ENCODE measurements at regions of chr1 and their contacts with region 1.

Region 1: GRCh38 chr1:205631727-205632373 is at the start of gene ELK4:
- DNase-seq: peak; percentile 99 to 100
- ATAC-seq: peak; percentile 83 to 93 (median 84)
- H3K4me3 ChIP-seq: peak within 1 kb of the TSS; percentile 74
- H3K4me3 Mint-ChIP-seq: peak within 1 kb of the TSS; percentile 97
- H3K27ac ChIP-seq: peak within 1 kb of the TSS; percentile 97
- H3K27ac Mint-ChIP-seq: peak within 1 kb of the TSS; percentile 97 to 99
- H3K4me1 ChIP-seq: peaks cover 22% of the 10 kb centered on the region
- H3K4me1 Mint-ChIP-seq: peaks cover 31 to 37% of the 10 kb centered on the region in 2 donors
- H3K27me3 ChIP-seq: no peaks in the 10 kb centered on the region
- H3K27me3 Mint-ChIP-seq: peaks cover 0 to 5% of the 10 kb centered on the region in 2 donors
- CTCF ChIP-seq: peak; percentile 75
- total RNA-seq, gene ELK4: 107 to 155 (median 139) TPM

Region 2: DNA sequence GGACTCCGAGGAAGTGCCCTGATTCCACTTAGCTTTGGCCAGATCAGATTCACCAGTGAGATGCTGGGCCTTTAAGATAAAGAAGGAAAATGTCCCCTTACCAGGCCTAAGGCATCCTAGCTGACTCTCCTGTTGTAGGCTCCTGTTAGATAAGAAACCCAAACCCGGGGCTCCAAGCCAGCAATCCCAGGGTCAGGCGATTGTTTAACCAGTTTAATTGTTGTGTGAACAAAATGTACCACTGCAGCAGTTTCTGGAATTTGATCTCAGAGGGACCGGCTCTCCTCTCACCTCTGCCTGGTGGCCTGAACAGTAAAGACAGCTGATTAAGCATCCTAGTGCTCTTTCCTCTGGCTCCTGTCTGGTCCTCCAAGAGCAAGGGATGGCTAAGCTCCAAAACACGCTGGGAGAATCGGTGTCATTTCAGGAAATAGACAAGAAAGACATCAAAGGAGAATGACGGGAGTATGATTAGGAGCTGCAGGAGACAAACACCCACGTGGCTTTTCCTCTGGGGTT is 265.8 kb before region 1 on chr1:
- intact Hi-C with region 1: no loop called
- DNase-seq: no peak
- ATAC-seq: no peak
- H3K4me3 ChIP-seq: no peak overlapping the region
- H3K4me3 Mint-ChIP-seq: no peak overlapping the region
- H3K27ac ChIP-seq: no peak overlapping the region
- H3K27ac Mint-ChIP-seq: no peak overlapping the region
- H3K4me1 ChIP-seq: no peaks in the 10 kb centered on the region
- H3K4me1 Mint-ChIP-seq: no peaks in the 10 kb centered on the region
- H3K27me3 ChIP-seq: no peaks in the 10 kb centered on the region
- H3K27me3 Mint-ChIP-seq: peaks cover 4 to 13% of the 10 kb centered on the region in 2 donors
- CTCF ChIP-seq: no peak

Region 3: GRCh38 chr1:205528887-205529825 is 102.7 kb before region 1 on chr1:
- intact Hi-C with region 1: loop called (anchors 2 kb)
- DNase-seq: peak; percentile 81 to 88
- ATAC-seq: peak; percentile 76 to 91 (median 88)
- H3K4me3 ChIP-seq: no peak overlapping the region
- H3K4me3 Mint-ChIP-seq: peak overlapping the region; percentile 35
- H3K27ac ChIP-seq: no peak overlapping the region
- H3K27ac Mint-ChIP-seq: no peak overlapping the region
- H3K4me1 ChIP-seq: peaks cover 9% of the 10 kb centered on the region
- H3K4me1 Mint-ChIP-seq: peaks cover 0 to 7% of the 10 kb centered on the region in 2 donors
- H3K27me3 ChIP-seq: no peaks in the 10 kb centered on the region
- H3K27me3 Mint-ChIP-seq: peaks cover 0 to 7% of the 10 kb centered on the region in 2 donors
- CTCF ChIP-seq: peak; percentile 95

Region 4: DNA sequence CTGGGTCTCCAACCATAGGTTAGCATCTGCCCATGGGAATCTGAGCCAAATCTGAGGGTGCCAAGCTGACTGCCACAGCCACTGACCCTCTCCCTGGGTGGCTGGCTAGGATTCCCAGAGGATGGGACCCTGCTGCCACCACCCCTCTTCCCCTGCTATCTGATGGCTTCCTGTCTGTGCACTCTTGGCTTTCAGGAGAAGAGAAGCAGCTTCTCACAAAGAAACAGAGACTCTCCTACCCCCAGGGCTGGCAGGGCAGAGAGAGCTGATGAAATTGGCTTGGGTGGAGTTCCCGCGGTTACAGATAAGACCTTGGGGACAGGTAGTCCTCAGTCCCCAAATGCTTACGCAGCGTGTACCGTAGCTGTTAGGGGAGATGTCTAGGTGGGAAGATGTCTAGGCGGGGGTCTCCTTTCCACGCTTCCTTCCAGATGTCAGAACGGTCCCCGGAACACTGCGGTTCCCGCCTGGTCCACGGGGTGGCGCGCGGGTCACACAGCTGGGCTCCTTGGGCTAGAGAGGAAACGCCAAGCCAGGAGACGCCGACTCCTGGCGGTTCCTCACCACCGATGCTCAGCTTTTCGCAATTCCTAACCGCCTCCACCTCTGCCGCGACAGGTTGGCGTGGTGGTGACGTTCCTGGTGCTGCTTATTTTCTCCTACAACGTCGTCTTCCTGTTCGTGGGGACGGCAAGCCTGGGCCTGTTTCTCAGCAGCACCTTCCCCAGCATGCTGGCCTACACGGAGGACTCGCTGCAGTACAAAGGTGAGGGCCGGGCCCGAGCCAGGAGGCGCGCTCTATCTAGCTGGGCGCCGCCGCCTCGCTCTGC is 40.1 kb before region 1 on chr1:
- intact Hi-C with region 1: loop called (anchors 1 kb)
- DNase-seq: peak; percentile 88 to 93
- ATAC-seq: peak; percentile 92 to 96 (median 94)
- H3K4me3 ChIP-seq: peak overlapping the region; percentile 36
- H3K4me3 Mint-ChIP-seq: peak overlapping the region; percentile 79
- H3K27ac ChIP-seq: peak overlapping the region; percentile 43
- H3K27ac Mint-ChIP-seq: peak overlapping the region; percentile 68 to 85
- H3K4me1 ChIP-seq: peaks cover 27% of the 10 kb centered on the region
- H3K4me1 Mint-ChIP-seq: peaks cover 13% of the 10 kb centered on the region in 2 donors
- H3K27me3 ChIP-seq: no peaks in the 10 kb centered on the region
- H3K27me3 Mint-ChIP-seq: peaks cover 0 to 3% of the 10 kb centered on the region in 2 donors
- CTCF ChIP-seq: peak; percentile 95

Region 5: GRCh38 chr1:205616563-205617293 is 15.1 kb before region 1 on chr1:
- intact Hi-C with region 1: no loop called
- DNase-seq: no peak
- ATAC-seq: no peak
- H3K4me3 ChIP-seq: no peak overlapping the region
- H3K4me3 Mint-ChIP-seq: no peak overlapping the region
- H3K27ac ChIP-seq: no peak overlapping the region
- H3K27ac Mint-ChIP-seq: peak overlapping the region in 1 of 2 donors; percentile 47
- H3K4me1 ChIP-seq: no peaks in the 10 kb centered on the region
- H3K4me1 Mint-ChIP-seq: peaks cover 6 to 16% of the 10 kb centered on the region in 2 donors
- H3K27me3 ChIP-seq: no peaks in the 10 kb centered on the region
- H3K27me3 Mint-ChIP-seq: no peaks in the 10 kb centered on the region
- CTCF ChIP-seq: no peak

Region 6: DNA sequence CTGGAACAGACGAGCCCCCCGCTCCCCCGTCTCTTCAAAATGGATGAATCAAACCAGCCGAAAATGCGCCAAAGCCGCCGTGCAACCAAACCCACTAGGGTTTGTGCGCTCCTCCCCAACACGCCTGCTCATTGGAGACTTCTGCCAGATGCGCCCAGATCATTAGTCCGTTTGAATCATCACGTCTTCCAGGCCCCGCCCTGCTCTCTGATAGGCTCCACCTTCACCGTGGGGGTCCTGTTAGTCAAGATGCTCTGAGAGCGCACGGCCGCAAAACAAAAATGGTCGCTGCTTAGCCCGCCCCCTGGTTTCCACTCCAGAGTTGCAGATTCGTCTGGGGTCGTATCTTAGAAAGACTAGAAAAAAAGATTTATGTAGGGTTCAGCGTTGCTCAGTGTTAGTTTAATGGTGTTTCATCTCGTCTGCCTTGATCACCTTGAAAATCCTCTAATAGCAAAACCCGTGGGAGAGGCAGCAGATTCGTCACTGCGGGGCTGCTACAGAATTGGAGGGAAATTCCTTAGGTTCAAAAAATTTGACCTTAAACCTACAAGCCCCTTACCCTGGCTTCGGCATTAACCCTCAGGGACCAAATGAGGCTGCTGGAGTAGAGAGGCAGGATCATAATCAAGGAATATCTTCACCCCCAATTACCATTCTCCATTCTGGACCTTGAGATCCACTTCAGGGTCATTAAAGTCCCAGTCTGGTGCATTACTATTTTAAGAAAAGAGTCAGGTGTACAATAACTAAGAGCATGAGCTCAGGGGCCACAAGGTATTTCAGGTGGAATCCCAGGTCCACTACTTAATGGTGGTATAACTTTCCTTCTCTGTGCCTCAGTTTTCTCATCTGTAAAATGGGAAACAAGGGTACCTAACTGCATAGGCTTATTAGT is 118.5 kb after region 1 on chr1 and contains the start of gene NUCKS1:
- intact Hi-C with region 1: loop called (anchors 2 kb)
- DNase-seq: peak; percentile 93 to 99
- ATAC-seq: peak; percentile 74 to 87 (median 77)
- H3K4me3 ChIP-seq: peak within 1 kb of the TSS; percentile 70
- H3K4me3 Mint-ChIP-seq: peak within 1 kb of the TSS; percentile 100
- H3K27ac ChIP-seq: peak within 1 kb of the TSS; percentile 86
- H3K27ac Mint-ChIP-seq: peak within 1 kb of the TSS; percentile 90 to 97
- H3K4me1 ChIP-seq: peaks cover 7% of the 10 kb centered on the region
- H3K4me1 Mint-ChIP-seq: peaks cover 26 to 35% of the 10 kb centered on the region in 2 donors
- H3K27me3 ChIP-seq: no peaks in the 10 kb centered on the region
- H3K27me3 Mint-ChIP-seq: no peaks in the 10 kb centered on the region
- CTCF ChIP-seq: no peak
- total RNA-seq, gene NUCKS1: 89.2 to 113 (median 103) TPM